Activated B cell treated with CpG ODN at 0.5 μM for 24 hours (primary cell): ENCODE measurements at regions of chr2 and their contacts with region 1.

Region 1: DNA sequence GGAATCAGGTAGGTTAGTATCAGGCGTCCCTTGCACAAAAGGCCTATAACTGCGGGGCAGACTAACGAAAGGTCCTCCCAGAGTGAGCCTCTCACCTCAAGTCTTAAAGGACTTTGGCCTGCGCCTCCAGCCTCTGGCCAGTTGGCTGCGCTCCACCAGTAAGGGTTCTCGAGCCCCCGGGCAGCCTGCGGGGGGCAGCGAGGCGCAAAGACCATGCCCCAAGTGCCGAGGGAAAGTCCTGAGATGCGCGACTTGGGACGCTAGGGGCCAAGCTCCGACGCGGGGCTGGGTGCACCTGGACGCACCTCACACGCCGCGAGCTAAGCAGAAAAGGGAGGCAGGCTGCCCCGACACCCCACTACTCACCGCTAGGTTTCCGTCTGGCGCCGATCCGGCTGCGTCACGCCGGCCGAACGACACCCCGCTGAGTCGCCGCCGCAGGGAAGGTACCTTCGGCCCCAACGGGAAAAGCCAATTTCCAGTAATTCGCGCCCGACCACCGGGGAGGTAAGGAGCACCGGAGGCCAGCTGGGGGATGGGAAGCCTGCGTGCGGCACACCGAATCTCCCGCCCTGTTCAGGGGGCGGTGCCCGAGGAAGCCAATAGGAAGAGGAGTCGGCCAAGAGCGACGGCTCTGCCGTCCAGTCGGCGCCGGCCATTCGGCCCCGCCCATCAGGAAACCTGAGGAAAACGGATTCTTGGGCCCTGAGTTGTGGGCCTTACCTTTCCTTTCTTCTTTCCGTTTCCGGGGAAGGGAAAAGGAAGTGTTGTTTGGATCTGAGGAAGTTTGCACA is at the start of gene ORC2:
- DNase-seq: peak; percentile 94
- ATAC-seq: peak; percentile 93
- H3K4me3 Mint-ChIP-seq: peak within 1 kb of the TSS; percentile 97
- H3K27ac Mint-ChIP-seq: peak within 1 kb of the TSS; percentile 97
- H3K4me1 Mint-ChIP-seq: peaks cover 63% of the 10 kb centered on the region
- H3K27me3 Mint-ChIP-seq: no peaks in the 10 kb centered on the region
- CTCF ChIP-seq: no peak
- total RNA-seq, gene ORC2: 36.8 and 38.1 TPM in 2 replicates

Region 2: DNA sequence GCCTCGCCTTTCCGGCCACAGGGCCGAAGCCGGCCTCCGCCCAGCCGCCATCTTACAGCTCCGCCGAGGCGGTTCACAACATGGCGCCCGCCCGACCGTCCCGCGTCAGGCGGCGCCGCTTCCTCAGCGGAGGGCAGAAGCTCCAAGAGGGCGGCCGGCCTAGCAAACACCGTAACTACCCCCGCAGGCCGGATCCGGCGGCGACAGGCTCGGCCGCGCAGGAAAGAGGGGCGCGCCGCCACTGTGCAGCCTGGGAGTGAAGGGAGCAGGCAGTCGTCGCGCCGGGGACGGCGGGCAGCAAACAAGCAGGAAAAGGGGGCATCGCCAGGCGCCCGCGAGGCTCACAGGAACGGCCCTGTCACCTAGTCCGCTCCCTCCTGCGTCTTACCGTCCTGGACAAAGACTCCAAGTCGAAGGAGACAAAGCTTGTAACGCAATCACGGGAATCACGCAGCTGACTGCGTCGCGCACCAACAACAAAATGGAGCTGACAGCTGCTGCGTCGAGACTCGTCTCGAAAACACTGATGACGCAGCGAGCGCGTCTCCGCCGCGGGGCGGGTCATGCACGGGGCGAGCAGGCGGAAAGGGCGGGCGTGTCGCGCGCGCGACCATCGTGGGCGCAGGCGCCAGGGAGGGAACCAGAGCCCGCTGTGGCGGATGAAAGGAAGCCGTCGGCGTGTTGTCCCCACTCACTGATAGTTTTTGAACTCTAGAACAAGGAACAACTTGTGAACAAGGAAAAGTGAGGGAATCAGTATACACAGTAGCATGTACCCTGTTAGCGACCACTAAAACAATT is 98.9 kb before region 1 on chr2 and contains the start of gene CLK1:
- CTCF ChIA-PET with region 1: no interaction called
- POLR2A ChIA-PET with region 1: interaction called, 23 read pairs
- intact Hi-C with region 1: loop called (anchors 1 kb)
- DNase-seq: peak; percentile 90
- ATAC-seq: peak; percentile 82
- H3K4me3 Mint-ChIP-seq: peak within 1 kb of the TSS; percentile 100
- H3K27ac Mint-ChIP-seq: peak within 1 kb of the TSS; percentile 100
- H3K4me1 Mint-ChIP-seq: peaks cover 41% of the 10 kb centered on the region
- H3K27me3 Mint-ChIP-seq: no peaks in the 10 kb centered on the region
- CTCF ChIP-seq: no peak
- total RNA-seq, gene CLK1: 173 and 203 TPM in 2 replicates

Region 3: DNA sequence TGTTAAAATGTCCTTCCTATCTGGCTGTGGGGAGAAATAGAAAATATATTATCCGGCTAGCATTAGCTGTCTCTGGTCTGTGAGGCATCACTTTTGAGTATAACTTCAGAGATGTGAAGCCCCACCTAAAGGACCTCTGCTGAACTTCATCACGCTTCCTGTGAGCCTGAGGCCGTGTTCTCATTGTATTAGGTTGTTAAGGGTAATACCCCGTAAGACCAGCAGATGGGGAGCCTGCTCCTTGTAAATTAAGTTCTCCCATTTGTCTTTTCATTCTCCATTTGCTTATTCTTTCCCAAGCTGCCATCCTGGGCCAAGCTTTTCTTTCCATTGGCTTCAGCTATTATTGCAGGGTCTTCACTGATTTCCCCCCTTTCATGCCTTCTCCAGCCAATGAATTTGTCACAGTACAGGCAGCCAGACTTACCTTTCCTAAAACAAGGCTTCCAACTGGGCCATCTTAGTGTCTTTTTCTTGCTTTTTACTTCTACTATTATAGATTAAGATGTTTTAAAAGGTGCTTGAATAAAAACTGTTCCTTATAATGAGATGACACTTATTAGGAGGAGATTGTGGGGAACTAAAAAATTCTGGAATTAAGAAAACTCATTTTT is 61.8 kb before region 1 on chr2:
- CTCF ChIA-PET with region 1: no interaction called
- POLR2A ChIA-PET with region 1: interaction called, 3 read pairs
- intact Hi-C with region 1: loop called (anchors 2 kb)
- DNase-seq: no peak
- ATAC-seq: peak; percentile 100
- H3K4me3 Mint-ChIP-seq: no peak overlapping the region
- H3K27ac Mint-ChIP-seq: peak overlapping the region; percentile 38
- H3K4me1 Mint-ChIP-seq: peaks cover 4% of the 10 kb centered on the region
- H3K27me3 Mint-ChIP-seq: no peaks in the 10 kb centered on the region
- CTCF ChIP-seq: peak; percentile 30

Region 4: GRCh38 chr2:200985799-200986198 is 22.5 kb after region 1 on chr2:
- CTCF ChIA-PET with region 1: no interaction called
- POLR2A ChIA-PET with region 1: no interaction called
- intact Hi-C with region 1: loop called (anchors 2 kb)
- DNase-seq: no peak
- ATAC-seq: no peak
- H3K4me3 Mint-ChIP-seq: no peak overlapping the region
- H3K27ac Mint-ChIP-seq: no peak overlapping the region
- H3K4me1 Mint-ChIP-seq: no peaks in the 10 kb centered on the region
- H3K27me3 Mint-ChIP-seq: no peaks in the 10 kb centered on the region
- CTCF ChIP-seq: no peak

Region 5: GRCh38 chr2:201171259-201171814 is 208.0 kb after region 1 on chr2:
- CTCF ChIA-PET with region 1: interaction called, 17 read pairs
- POLR2A ChIA-PET with region 1: no interaction called
- intact Hi-C with region 1: no loop called
- DNase-seq: no peak
- ATAC-seq: no peak
- H3K4me3 Mint-ChIP-seq: no peak overlapping the region
- H3K27ac Mint-ChIP-seq: no peak overlapping the region
- H3K4me1 Mint-ChIP-seq: peaks cover 32% of the 10 kb centered on the region
- H3K27me3 Mint-ChIP-seq: no peaks in the 10 kb centered on the region
- CTCF ChIP-seq: no peak